Astrocyte of the cerebellum (primary cell): ENCODE measurements at regions of chr3 and their contacts with region 1.

Region 1: GRCh38 chr3:194486540-194487288 is at the start of gene ATP13A3:
- DNase-seq: peak; percentile 65
- H3K4me3 ChIP-seq: peak within 1 kb of the TSS; percentile 60
- CTCF ChIP-seq: no peak

Region 2: DNA sequence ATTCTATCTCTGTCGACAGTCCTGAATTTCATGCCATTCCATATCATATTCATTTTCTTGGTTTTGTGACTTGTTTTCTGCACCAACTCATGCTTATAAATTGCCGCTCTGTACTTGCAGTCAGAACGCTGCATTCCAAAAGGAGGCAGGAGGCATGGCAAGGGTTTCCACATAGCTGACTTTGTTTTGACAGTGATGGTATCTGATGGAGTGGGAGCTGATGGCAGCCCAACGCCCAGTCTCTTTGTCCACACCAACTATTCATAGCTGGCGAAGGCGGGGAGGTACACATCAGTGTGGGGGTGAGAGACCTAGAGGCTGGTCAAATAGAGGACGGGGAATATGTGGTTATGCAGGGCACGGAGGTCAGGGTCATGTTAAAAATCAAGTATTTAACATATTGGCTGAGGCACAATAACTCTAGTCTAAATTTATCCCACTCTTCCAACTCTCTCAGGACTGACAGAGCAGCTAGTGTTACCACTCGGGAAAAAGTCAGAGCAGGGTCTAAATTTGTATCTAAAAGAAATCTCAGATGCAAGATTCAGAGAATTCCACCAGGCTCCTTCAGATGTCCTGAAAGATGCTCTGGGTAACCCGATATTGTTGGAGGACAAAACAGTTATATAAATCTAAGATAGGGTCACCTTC is 67.9 kb after region 1 on chr3:
- in situ Hi-C with region 1: loop called (anchors 5 kb)
- DNase-seq: no peak
- H3K4me3 ChIP-seq: no peak overlapping the region
- CTCF ChIP-seq: no peak